ENCODE measurements at regions of chr2 and their contacts with region 1.

Region 1: GRCh38 chr2:137947728-137948336 is 16.4 kb upstream of the HNMT start:
- DNase-seq: peak; percentile 58 to 81 (median 70)
- ATAC-seq: peak in 3 of 4 donors; percentile 64 to 78 (median 70)
- H3K4me3 ChIP-seq: no peak overlapping the region
- H3K27ac ChIP-seq: no peak overlapping the region
- H3K4me1 ChIP-seq: no peaks in the 10 kb centered on the region
- H3K27me3 ChIP-seq: no peaks in the 10 kb centered on the region
- CTCF ChIP-seq: peak; percentile 44 to 77 (median 66)
- POLR2A ChIP-seq: no peak

Region 2: DNA sequence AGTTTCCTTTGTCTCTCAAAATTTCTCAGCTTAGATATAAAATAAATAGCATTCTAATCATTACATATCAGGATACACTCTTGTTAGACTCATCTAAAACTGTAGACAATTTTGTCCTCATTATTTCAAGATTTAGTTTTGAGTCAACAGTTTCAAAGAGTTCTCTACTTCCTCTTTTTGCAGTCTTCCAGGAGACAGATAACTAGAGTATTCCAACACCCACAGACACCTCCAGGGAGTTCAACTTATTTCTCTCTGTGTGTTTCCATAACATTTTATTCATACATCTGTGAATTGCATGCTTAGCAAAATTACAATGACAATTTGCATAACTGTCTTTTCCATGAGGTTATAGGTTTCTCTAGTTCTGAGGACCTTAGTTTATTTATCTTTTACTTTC is 150.2 kb before region 1 on chr2:
- intact Hi-C with region 1: no loop called
- DNase-seq: no peak
- ATAC-seq: no peak
- H3K4me3 ChIP-seq: no peak overlapping the region
- H3K27ac ChIP-seq: no peak overlapping the region
- H3K4me1 ChIP-seq: no peaks in the 10 kb centered on the region
- H3K27me3 ChIP-seq: no peaks in the 10 kb centered on the region
- CTCF ChIP-seq: no peak
- POLR2A ChIP-seq: no peak

Region 3: DNA sequence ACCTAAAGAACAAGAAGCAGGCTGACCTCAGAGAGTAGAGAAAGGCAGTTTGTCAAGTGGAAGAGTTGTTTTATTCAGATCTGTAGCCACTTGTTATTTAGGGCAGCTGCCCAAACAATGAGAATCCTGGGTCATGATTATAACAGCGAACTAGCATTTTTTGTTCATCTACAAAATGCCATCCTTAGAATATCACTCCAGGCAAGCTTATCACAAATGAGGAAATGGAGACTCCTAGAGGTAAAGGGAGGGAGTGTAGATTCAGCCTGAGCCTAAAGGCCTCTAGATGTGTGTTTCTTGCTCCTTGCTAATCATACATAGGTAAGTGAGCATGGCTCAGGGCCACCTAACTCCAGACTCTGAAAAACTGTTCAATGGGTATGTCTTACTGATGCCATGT is 142.5 kb after region 1 on chr2:
- intact Hi-C with region 1: loop called in 6 of 10 experiments (anchors 2 to 10 kb)
- DNase-seq: no peak
- ATAC-seq: peak in 1 of 4 donors; percentile 42
- H3K4me3 ChIP-seq: no peak overlapping the region
- H3K27ac ChIP-seq: no peak overlapping the region
- H3K4me1 ChIP-seq: peaks cover 0 to 9% (median 4%) of the 10 kb centered on the region in 12 donors
- H3K27me3 ChIP-seq: no peaks in the 10 kb centered on the region
- CTCF ChIP-seq: peak in 10 of 12 donors; percentile 30 to 61 (median 37)
- POLR2A ChIP-seq: no peak

Region 4: GRCh38 chr2:138364554-138365162 is 416.8 kb after region 1 on chr2:
- intact Hi-C with region 1: loop called in 1 of 10 experiments (anchors 5 kb)
- DNase-seq: no peak
- ATAC-seq: peak in 1 of 4 donors; percentile 73
- H3K4me3 ChIP-seq: no peak overlapping the region
- H3K27ac ChIP-seq: no peak overlapping the region
- H3K4me1 ChIP-seq: peaks cover 0 to 13% (median 0%) of the 10 kb centered on the region in 12 donors
- H3K27me3 ChIP-seq: no peaks in the 10 kb centered on the region
- CTCF ChIP-seq: no peak
- POLR2A ChIP-seq: no peak

Region 5: DNA sequence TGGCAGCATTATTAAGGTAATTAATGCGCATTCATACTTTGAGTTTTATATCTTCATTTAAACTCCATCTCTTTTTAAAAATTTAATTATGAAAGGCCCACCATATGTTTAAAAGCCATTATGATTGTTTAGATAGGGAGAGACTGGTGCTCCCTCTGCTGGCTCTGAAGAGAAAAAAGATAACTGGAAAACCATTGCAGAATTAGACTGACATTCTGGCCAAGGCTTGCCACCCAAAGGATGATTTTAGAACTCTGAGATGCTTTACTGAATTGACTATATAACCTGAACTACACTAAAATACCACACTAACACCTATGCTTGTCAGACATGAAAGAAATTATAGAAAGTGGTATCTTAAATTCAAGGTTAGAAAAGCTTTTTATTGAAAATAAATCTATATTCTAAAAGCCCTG is 426.2 kb after region 1 on chr2:
- intact Hi-C with region 1: loop called in 9 of 10 experiments (anchors 1 to 10 kb)
- DNase-seq: no peak
- ATAC-seq: no peak
- H3K4me3 ChIP-seq: no peak overlapping the region
- H3K27ac ChIP-seq: no peak overlapping the region
- H3K4me1 ChIP-seq: no peaks in the 10 kb centered on the region
- H3K27me3 ChIP-seq: no peaks in the 10 kb centered on the region
- CTCF ChIP-seq: peak; percentile 37 to 74 (median 61)
- POLR2A ChIP-seq: no peak

Region 6: DNA sequence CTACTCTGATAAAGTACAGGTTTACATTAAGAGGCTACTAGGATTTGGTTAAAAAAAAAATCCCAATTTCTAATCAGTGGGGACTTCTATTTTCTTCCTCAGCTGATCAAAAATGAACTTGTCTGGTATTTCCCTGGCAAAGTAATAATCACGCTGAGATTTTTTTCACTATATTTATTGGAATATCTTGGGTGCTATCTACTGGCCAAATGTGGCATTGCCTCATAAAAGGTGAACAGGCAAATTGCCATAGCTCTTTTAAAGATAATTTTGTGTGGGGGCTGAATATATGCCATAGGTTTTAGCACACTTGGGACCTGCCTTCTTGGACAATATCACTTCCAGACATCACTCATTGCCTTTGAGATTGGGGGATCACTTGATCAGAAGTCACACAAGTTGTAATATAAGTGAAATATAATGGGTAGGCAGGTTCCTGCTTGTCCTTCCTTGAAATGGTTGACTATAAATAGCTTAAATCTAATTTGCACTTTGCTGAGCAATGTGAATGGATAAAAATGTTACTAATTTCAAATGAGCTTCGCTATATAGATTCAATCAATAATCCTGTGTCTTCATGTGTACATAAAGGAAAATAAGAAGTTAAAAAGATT is 839.3 kb after region 1 on chr2:
- intact Hi-C with region 1: loop called in 5 of 10 experiments (anchors 5 to 10 kb)
- DNase-seq: no peak
- ATAC-seq: no peak
- H3K4me3 ChIP-seq: no peak overlapping the region
- H3K27ac ChIP-seq: no peak overlapping the region
- H3K4me1 ChIP-seq: no peaks in the 10 kb centered on the region
- H3K27me3 ChIP-seq: peaks cover 0 to 8% (median 0%) of the 10 kb centered on the region in 9 donors
- CTCF ChIP-seq: peak; percentile 48 to 78 (median 70)
- POLR2A ChIP-seq: no peak

Measured in heart left ventricle (tissue), 16 donors.